Activated CD4-positive, alpha-beta T cell treated with anti-CD3 and anti-CD28 coated beads for 36 hours (primary cell): ENCODE measurements at regions of chr12 and their contacts with region 1.

Region 1: DNA sequence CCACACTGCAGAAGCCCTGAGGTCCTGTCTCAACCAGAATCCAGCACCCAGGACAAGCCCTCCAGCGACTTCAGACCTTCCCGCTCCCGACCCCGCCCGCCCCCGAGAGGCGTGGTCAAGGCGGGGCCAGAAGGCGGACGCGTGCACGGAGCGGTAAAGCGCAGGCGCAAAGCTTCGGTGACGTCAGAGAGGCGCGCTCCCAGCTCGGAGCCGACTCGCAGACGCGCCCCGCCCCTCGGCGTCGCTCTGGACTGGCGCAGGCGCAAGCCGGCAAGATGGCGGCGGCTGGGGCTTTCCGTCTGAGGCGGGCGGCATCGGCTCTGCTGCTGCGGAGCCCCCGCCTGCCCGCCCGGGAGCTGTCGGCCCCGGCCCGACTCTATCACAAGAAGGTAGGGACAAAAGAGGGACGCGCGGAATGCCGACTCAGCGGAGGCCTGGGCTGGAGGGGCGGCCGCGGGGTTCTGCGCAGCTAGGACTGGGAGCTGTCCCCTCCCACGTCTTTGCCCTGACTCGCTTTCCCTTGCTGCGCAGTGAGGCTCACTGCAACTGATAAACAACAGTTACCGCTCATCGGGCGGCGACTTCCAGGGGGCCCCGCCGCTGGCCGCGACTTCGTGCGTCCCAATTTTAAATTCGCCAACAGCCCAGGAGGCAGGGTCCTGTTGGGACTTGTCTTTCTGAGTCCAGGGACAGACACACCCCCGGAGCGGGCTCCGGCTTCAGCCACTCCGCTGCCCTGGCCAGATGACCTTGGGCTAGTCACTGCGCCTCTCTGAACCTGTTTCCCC is at the start of gene ISCU:
- DNase-seq: peak; percentile 99
- ATAC-seq: peak; percentile 57
- H3K4me3 Mint-ChIP-seq: peak within 1 kb of the TSS; percentile 100
- H3K27ac Mint-ChIP-seq: peak within 1 kb of the TSS; percentile 100
- H3K4me1 Mint-ChIP-seq: peaks cover 48% of the 10 kb centered on the region
- H3K27me3 Mint-ChIP-seq: no peaks in the 10 kb centered on the region
- total RNA-seq, gene ISCU: 67.3 to 83.8 TPM

Region 2: DNA sequence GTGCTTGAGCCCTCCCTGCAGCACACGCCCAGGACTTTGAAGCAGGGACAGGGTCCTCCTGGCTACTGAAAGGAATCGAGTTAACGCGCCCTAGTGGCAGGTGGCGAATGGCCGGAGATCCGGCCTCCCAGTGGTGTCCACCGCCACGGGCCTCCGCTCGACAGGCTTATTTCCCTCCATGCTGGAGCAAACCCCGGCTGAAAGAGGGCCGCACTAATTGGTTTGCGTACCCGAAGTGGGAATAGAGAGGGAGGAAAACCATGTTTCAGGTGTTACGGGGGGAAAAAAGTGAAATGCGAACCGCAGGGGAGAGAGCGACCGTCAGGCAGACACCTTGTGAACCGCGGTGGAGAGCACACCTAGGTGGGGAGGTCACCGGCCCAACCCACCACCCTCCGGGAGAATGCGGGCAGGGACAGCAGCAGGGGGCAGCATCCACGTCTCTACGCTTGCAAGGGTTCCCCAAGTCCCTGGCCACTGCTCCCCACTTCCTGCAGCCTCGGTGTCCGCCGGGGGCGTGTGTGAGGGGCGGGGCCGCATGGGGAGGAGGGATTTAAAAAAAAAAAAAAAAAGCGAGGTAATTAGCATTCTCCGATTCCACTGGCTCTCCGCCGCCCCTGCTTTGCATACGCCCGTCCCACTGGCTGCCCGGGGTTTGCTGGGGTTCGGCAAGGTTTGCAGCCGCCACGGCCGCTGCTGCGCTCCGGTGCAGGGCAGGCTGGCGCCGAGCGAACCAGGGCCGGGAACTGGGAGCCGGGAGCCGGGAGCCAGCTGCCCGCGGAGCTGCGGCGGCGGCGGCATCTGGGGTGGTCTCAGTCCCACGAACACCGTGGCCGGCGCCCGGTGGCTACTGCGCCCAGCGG is 1244.6 kb before region 1 on chr12:
- CTCF ChIA-PET with region 1: no interaction called
- POLR2A ChIA-PET with region 1: no interaction called
- intact Hi-C with region 1: loop called in 1 of 2 experiments (anchors 5 kb)
- DNase-seq: peak; percentile 93
- ATAC-seq: peak; percentile 66
- H3K4me3 Mint-ChIP-seq: peak overlapping the region; percentile 86
- H3K27ac Mint-ChIP-seq: no peak overlapping the region
- H3K4me1 Mint-ChIP-seq: peaks cover 27% of the 10 kb centered on the region
- H3K27me3 Mint-ChIP-seq: peaks cover 2% of the 10 kb centered on the region

Region 3: DNA sequence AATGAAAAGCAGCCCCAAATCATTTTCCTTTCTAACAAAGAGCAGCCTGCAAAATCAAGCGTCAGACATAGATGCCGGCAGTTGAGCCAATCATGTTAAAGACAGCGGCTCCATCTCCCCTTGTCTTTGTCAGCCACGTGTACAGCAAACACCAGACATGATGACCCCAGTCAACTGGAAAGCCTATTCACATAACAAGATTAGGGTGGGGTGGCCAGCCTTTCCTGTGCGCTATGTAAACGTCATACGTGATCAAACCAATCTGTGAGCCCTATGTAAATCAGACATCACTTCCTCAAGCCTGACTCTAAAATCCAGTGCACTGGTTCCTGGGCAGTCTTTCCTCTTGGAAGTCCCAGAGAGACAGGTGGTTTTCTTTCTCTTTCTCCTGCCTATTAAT is 57.4 kb before region 1 on chr12:
- CTCF ChIA-PET with region 1: no interaction called
- POLR2A ChIA-PET with region 1: no interaction called
- intact Hi-C with region 1: no loop called
- DNase-seq: no peak
- ATAC-seq: no peak
- H3K4me3 Mint-ChIP-seq: no peak overlapping the region
- H3K27ac Mint-ChIP-seq: no peak overlapping the region
- H3K4me1 Mint-ChIP-seq: peaks cover 7% of the 10 kb centered on the region
- H3K27me3 Mint-ChIP-seq: peaks cover 9% of the 10 kb centered on the region

Region 4: GRCh38 chr12:108618079-108618952 is 55.8 kb after region 1 on chr12:
- CTCF ChIA-PET with region 1: interaction called, 270 read pairs
- POLR2A ChIA-PET with region 1: interaction called, 7 read pairs
- intact Hi-C with region 1: loop called (anchors 1 kb)
- DNase-seq: peak; percentile 88
- ATAC-seq: peak; percentile 46
- H3K4me3 Mint-ChIP-seq: no peak overlapping the region
- H3K27ac Mint-ChIP-seq: peak overlapping the region; percentile 62
- H3K4me1 Mint-ChIP-seq: peaks cover 40% of the 10 kb centered on the region
- H3K27me3 Mint-ChIP-seq: no peaks in the 10 kb centered on the region

Region 5: DNA sequence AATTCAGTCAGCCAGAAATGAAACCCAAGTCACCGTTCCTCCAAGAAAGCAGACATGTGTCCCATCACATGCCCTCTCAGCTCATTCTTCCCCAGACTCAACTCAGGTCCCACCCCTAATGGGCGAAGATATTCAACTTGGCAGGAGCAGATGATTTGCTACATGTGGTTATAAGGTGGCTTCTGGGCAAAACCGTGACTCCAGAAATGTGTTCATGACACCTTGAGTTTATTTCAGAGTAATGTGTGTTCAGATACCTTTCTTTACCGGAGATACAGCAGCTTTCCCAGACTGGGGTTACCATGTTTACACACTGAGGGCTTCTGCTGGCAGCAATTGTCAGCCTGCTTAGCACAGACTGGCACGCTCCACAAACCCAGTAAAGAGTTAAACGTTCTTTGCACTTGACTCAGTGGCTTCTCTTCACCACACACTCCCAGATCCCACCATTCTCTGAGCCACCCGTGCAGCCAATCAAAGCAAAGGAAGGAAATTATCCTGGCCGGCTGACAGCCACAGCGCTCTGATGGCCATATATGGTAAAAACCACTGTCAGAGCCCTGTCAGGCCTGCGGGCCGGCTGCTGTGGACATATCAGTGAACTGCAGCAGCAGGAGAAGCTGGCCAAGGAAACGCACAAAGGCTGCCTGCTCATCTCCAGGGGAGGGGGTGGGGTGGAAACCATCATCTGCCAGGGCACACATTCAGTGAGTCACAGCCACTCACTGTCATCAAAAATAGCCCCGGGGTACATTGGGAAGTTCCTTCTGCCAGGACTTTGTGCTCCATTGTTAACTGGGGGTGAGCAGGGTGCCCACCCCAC is 128.8 kb after region 1 on chr12:
- CTCF ChIA-PET with region 1: interaction called, 8 read pairs
- POLR2A ChIA-PET with region 1: interaction called, 3 read pairs
- intact Hi-C with region 1: loop called (anchors 1 to 5 kb)
- DNase-seq: peak; percentile 92
- ATAC-seq: peak; percentile 63
- H3K4me3 Mint-ChIP-seq: peak overlapping the region; percentile 67
- H3K27ac Mint-ChIP-seq: peak overlapping the region; percentile 96
- H3K4me1 Mint-ChIP-seq: peaks cover 80% of the 10 kb centered on the region
- H3K27me3 Mint-ChIP-seq: no peaks in the 10 kb centered on the region

Region 6: DNA sequence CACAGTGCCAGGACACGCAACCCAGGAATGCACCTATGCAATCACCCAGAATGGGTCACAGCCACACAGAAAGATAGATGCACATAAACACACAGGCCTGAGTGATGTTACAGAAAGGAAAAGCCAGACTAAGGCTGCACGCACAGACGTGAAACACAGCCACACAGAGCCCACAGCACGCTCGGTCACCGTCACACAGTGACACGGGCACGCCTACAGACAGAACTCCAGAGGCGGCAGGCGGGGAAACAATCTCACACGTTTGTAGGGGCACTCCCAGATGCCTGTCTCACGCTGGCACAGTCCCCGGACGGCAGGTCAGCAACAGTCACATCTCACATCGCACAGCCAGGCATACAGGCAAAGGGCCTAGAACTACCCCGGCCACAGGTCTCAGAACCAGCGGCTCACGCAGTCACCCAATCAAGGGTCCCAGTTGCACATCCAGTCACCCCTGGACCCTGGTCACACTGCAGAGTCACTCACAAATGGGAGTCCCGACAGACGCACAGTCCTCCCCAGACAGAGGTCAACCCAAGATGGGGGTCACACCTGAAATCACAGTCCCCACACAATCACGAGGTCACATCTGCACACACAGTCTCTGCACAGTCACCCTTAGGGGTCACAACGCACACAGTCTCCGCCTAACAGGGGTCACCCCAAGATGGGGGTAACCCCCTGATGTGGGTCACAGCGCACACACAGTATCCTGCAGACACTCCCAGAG is 294.1 kb after region 1 on chr12:
- CTCF ChIA-PET with region 1: no interaction called
- POLR2A ChIA-PET with region 1: no interaction called
- intact Hi-C with region 1: loop called (anchors 1 to 5 kb)
- DNase-seq: peak; percentile 81
- ATAC-seq: peak; percentile 64
- H3K4me3 Mint-ChIP-seq: peak overlapping the region; percentile 82
- H3K27ac Mint-ChIP-seq: peak overlapping the region; percentile 86
- H3K4me1 Mint-ChIP-seq: peaks cover 43% of the 10 kb centered on the region
- H3K27me3 Mint-ChIP-seq: peaks cover 2% of the 10 kb centered on the region

Region 7: GRCh38 chr12:109154451-109155438 is 592.2 kb after region 1 on chr12:
- CTCF ChIA-PET with region 1: no interaction called
- POLR2A ChIA-PET with region 1: no interaction called
- intact Hi-C with region 1: loop called in 1 of 2 experiments (anchors 1 kb)
- DNase-seq: peak; percentile 93
- ATAC-seq: peak; percentile 94
- H3K4me3 Mint-ChIP-seq: peak overlapping the region; percentile 82
- H3K27ac Mint-ChIP-seq: peak overlapping the region; percentile 85
- H3K4me1 Mint-ChIP-seq: peaks cover 17% of the 10 kb centered on the region
- H3K27me3 Mint-ChIP-seq: peaks cover 1% of the 10 kb centered on the region